ENCODE measurements at regions of chr20 and their contacts with region 1.

Region 1: DNA sequence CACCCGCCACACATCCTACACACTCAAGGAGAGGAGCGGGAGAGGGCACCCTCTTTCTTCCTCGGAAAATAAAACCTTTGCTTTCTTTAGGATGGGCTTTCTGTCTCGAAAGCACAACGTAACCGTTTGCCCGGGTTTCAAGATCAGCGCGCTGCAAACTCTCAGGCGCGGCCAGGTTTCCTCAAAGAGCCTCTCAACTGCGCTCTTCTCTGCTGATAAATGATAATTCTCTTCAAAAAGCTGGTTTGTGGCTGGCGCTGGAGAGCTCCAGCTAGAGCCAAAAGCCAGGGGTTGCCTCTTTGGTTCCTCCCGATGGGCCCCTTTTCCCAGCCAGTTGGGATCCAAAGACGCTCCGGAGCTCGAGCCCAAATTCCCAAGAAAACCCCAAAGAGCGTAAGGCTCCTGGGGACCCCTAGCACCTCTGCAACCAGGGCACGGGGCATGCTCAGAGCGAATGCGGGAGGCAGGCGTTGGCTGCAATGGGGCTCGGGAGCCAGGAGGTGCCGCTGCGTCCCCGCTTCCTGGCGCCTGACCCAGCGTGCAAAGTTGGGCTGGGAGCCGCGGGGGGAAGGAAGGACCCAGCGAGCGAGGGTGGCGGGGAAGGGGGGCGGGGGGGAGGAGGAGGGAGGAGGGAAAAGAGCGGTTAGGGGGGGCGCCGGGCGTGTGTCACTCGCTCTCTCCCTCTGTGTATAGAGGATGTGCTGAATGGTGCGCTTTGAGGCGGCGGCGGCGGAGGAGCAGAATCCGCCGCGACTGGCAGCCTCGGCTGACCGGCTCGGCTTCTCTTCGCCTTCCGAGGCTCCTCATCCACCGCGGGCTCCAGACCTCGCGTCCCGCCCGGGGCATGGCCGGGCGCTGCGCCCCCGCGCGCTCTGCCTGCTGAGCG is at the start of gene PLCB1:
- DNase-seq: peak; percentile 59 to 82 (median 70)
- ATAC-seq: peak; percentile 93
- H3K4me3 ChIP-seq: peak within 1 kb of the TSS; percentile 57
- H3K4me3 Mint-ChIP-seq: peak within 1 kb of the TSS; percentile 67 to 87 (median 80)
- H3K27ac ChIP-seq: no peak within 1 kb of the TSS
- H3K27ac Mint-ChIP-seq: peak within 1 kb of the TSS in 2 of 9 donors; percentile 22 to 42
- H3K4me1 ChIP-seq: peaks cover 6 to 16% of the 10 kb centered on the region in 2 donors
- H3K4me1 Mint-ChIP-seq: peaks cover 7 to 20% (median 9%) of the 10 kb centered on the region in 7 donors
- H3K27me3 ChIP-seq: peaks cover 0 to 3% of the 10 kb centered on the region in 2 donors
- H3K27me3 Mint-ChIP-seq: peaks cover 13 to 54% (median 28%) of the 10 kb centered on the region in 5 donors
- total RNA-seq, gene PLCB1: 0.56 to 17.6 (median 2.3) TPM

Region 2: DNA sequence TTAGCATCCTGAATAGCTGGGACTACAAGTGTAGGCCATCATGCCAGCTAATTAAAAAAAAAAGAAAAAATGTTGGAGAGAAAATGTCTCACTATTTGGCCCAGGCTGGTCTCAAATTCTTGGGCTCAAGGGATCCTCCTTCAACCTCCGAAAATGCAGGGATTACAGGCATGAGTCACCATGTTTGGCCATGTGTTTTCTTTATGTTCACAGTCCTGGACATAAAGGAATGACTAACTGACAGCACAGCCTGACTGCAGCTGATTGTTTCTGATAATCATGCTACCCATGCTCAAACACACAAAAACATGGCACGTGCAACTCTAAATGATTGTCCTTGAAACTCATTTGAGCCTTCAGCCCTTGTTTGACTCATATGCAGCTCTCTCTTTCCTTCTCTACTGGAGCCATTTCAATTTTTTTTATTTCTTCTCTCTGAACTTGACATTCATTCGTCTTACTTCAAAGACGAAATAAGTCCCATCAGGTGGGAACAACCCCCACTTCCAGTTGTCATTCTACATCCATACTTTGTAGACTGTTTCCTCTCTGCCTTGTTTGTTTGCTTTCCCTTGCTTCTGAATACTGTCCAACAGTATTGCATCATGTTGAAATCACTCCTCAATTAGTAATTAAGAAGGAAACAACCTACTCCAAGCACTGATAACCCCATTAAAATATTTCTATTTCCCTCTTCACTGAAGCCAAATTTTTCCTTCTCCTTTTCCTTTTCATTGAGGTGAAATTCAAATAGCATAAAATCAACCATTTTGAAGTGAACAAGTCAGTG is 951.4 kb before region 1 on chr20:
- CTCF ChIA-PET with region 1: no interaction called
- POLR2A ChIA-PET with region 1: no interaction called
- intact Hi-C with region 1: no loop called
- DNase-seq: no peak
- ATAC-seq: no peak
- H3K4me3 ChIP-seq: no peak overlapping the region
- H3K4me3 Mint-ChIP-seq: no peak overlapping the region
- H3K27ac ChIP-seq: no peak overlapping the region
- H3K27ac Mint-ChIP-seq: no peak overlapping the region
- H3K4me1 ChIP-seq: no peaks in the 10 kb centered on the region
- H3K4me1 Mint-ChIP-seq: no peaks in the 10 kb centered on the region
- H3K27me3 ChIP-seq: no peaks in the 10 kb centered on the region
- H3K27me3 Mint-ChIP-seq: no peaks in the 10 kb centered on the region

Region 3: GRCh38 chr20:8073116-8073832 is 58.6 kb before region 1 on chr20:
- CTCF ChIA-PET with region 1: no interaction called
- POLR2A ChIA-PET with region 1: no interaction called
- intact Hi-C with region 1: loop called in 1 of 2 experiments (anchors 2 kb)
- DNase-seq: peak in 7 of 9 donors; percentile 10 to 51 (median 40)
- ATAC-seq: peak; percentile 88
- H3K4me3 ChIP-seq: no peak overlapping the region
- H3K4me3 Mint-ChIP-seq: peak overlapping the region in 6 of 10 donors; percentile 3 to 40 (median 18)
- H3K27ac ChIP-seq: peak overlapping the region; percentile 16
- H3K27ac Mint-ChIP-seq: peak overlapping the region; percentile 14 to 95 (median 87)
- H3K4me1 ChIP-seq: peaks cover 0 to 7% of the 10 kb centered on the region in 2 donors
- H3K4me1 Mint-ChIP-seq: peaks cover 6 to 20% (median 10%) of the 10 kb centered on the region in 7 donors
- H3K27me3 ChIP-seq: no peaks in the 10 kb centered on the region
- H3K27me3 Mint-ChIP-seq: no peaks in the 10 kb centered on the region

Region 4: DNA sequence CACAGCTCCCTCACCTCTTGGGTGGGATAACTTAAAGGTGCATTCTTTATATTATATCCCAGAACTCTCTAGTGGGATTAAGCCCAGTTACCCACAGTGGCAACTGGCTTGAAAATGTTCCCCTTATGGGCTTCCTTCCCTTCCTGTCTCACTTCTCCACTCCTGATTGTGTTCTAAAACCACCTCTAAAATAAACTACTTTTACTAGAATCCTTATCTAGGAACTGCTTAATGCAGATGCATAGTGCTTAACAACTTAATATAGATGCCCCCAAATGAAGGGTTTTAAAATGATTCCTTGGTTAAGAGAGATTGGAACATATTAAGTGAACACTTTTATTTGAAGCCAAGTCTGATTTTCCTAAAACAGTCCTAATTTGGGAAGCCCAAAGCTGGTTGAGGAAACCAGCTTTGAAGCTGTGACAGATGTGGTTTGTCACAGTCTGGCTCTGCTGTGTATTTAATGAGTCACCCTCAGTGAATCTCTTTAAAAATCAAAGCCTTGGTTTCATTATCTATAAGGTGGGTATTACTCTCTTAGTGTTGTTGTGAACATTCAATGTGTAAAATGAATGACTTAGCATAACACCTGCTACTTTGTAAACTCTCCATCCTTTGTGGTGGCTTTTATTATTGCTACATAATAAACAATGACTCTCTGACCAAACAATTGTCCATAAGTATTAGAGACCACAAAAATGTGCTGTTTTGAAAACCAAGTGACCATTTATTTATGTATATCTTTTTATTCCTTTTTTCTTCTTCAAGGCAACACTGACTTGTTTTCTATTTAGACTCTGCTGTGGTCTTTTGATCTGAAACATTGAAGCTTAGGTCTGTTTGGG is 24.6 kb after region 1 on chr20:
- CTCF ChIA-PET with region 1: no interaction called
- POLR2A ChIA-PET with region 1: no interaction called
- intact Hi-C with region 1: loop called in 1 of 2 experiments (anchors 2 kb)
- DNase-seq: no peak
- ATAC-seq: peak; percentile 81
- H3K4me3 ChIP-seq: no peak overlapping the region
- H3K4me3 Mint-ChIP-seq: peak overlapping the region in 4 of 10 donors; percentile 4 to 29 (median 8)
- H3K27ac ChIP-seq: no peak overlapping the region
- H3K27ac Mint-ChIP-seq: peak overlapping the region in 1 of 9 donors; percentile 4
- H3K4me1 ChIP-seq: peaks cover 13 to 61% of the 10 kb centered on the region in 2 donors
- H3K4me1 Mint-ChIP-seq: peaks cover 28 to 61% (median 51%) of the 10 kb centered on the region in 7 donors
- H3K27me3 ChIP-seq: no peaks in the 10 kb centered on the region
- H3K27me3 Mint-ChIP-seq: peaks cover 0 to 6% (median 0%) of the 10 kb centered on the region in 5 donors

Region 5: GRCh38 chr20:8305449-8305978 is 173.7 kb after region 1 on chr20:
- CTCF ChIA-PET with region 1: interaction called, 5 read pairs
- POLR2A ChIA-PET with region 1: no interaction called
- intact Hi-C with region 1: loop called in 1 of 2 experiments (anchors 1 kb)
- DNase-seq: peak; percentile 36 to 78 (median 64)
- ATAC-seq: peak; percentile 95
- H3K4me3 ChIP-seq: no peak overlapping the region
- H3K4me3 Mint-ChIP-seq: peak overlapping the region in 2 of 10 donors; percentile 28 to 45
- H3K27ac ChIP-seq: no peak overlapping the region
- H3K27ac Mint-ChIP-seq: no peak overlapping the region
- H3K4me1 ChIP-seq: peaks cover 0 to 8% of the 10 kb centered on the region in 2 donors
- H3K4me1 Mint-ChIP-seq: peaks cover 0 to 8% (median 0%) of the 10 kb centered on the region in 7 donors
- H3K27me3 ChIP-seq: no peaks in the 10 kb centered on the region
- H3K27me3 Mint-ChIP-seq: no peaks in the 10 kb centered on the region

Region 6: DNA sequence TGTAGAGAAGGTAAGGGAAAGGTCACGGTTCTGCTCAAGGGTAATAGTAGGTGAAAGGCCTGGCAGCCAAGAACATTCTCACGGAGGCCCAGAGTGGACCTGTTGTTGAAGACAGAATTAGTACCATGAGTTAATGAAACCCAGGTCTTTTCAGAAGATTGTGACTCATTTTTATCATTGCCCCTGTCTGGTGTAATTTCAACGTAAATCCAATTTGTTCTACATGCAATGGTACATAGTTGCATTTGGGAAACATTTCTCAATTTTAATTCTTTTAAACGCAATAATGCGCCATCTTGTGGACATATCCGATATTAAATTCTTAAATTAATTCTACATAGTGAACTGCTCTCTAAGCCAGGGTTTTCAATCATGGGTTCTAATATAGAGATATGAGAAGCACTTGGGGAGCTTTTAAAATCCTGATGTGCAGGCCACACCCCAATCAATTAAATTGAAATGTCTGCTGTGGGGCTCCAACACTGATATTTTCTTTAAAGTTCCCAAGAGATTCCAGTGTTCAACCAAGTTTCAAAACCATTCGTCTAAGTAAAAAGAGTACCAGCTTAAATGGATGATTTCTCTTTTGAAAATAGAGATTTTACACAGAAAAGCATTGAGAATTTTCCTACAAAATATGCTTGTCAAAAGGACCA is 257.7 kb after region 1 on chr20:
- CTCF ChIA-PET with region 1: interaction called, 3 read pairs
- POLR2A ChIA-PET with region 1: no interaction called
- intact Hi-C with region 1: loop called (anchors 1 kb)
- DNase-seq: peak in 5 of 9 donors; percentile 13 to 40 (median 28)
- ATAC-seq: peak; percentile 55
- H3K4me3 ChIP-seq: no peak overlapping the region
- H3K4me3 Mint-ChIP-seq: no peak overlapping the region
- H3K27ac ChIP-seq: no peak overlapping the region
- H3K27ac Mint-ChIP-seq: peak overlapping the region in 1 of 9 donors; percentile 23
- H3K4me1 ChIP-seq: no peaks in the 10 kb centered on the region
- H3K4me1 Mint-ChIP-seq: peaks cover 0 to 6% (median 0%) of the 10 kb centered on the region in 7 donors
- H3K27me3 ChIP-seq: no peaks in the 10 kb centered on the region
- H3K27me3 Mint-ChIP-seq: peaks cover 0 to 9% (median 0%) of the 10 kb centered on the region in 5 donors

Measured in naive thymus-derived CD4-positive, alpha-beta T cell (primary cell).